Adrenal gland (tissue), 19 donors: ENCODE measurements at regions of chr5 and their contacts with region 1.

Region 1: GRCh38 chr5:138226910-138227309 is 13.8 kb upstream of the CDC23 start:
- DNase-seq: no peak
- H3K4me3 ChIP-seq: no peak overlapping the region
- H3K27ac ChIP-seq: no peak overlapping the region
- H3K4me1 ChIP-seq: peaks cover 0 to 26% of the 10 kb centered on the region in 2 donors
- H3K27me3 ChIP-seq: no peaks in the 10 kb centered on the region
- CTCF ChIP-seq: no peak
- POLR2A ChIP-seq: no peak

Region 2: GRCh38 chr5:138282920-138283742 is 56.2 kb after region 1 on chr5:
- intact Hi-C with region 1: loop called in 1 of 2 experiments (anchors 10 kb)
- DNase-seq: peak; percentile 20 to 72 (median 56)
- H3K4me3 ChIP-seq: no peak overlapping the region
- H3K27ac ChIP-seq: no peak overlapping the region
- H3K4me1 ChIP-seq: no peaks in the 10 kb centered on the region
- H3K27me3 ChIP-seq: no peaks in the 10 kb centered on the region
- CTCF ChIP-seq: peak in 5 of 6 experiments; percentile 18 to 61 (median 52)
- POLR2A ChIP-seq: no peak